Esophagus squamous epithelium (tissue), 5 donors: ENCODE measurements at regions of chr7 and their contacts with region 1.

Region 1: GRCh38 chr7:95723592-95724180 is 48.7 kb upstream of the DYNC1I1 start:
- DNase-seq: no peak
- H3K4me3 ChIP-seq: no peak overlapping the region
- H3K27ac ChIP-seq: no peak overlapping the region
- H3K4me1 ChIP-seq: no peaks in the 10 kb centered on the region
- H3K27me3 ChIP-seq: no peaks in the 10 kb centered on the region
- CTCF ChIP-seq: peak in 5 of 6 experiments; percentile 7 to 53 (median 44)
- POLR2A ChIP-seq: no peak

Region 2: GRCh38 chr7:95871078-95871782 is 147.5 kb after region 1 on chr7:
- intact Hi-C with region 1: loop called (anchors 10 kb)
- DNase-seq: no peak
- H3K4me3 ChIP-seq: no peak overlapping the region
- H3K27ac ChIP-seq: no peak overlapping the region
- H3K4me1 ChIP-seq: no peaks in the 10 kb centered on the region
- H3K27me3 ChIP-seq: no peaks in the 10 kb centered on the region
- CTCF ChIP-seq: peak; percentile 46 to 60 (median 59)
- POLR2A ChIP-seq: no peak

Region 3: GRCh38 chr7:96045919-96046318 is 322.2 kb after region 1 on chr7:
- intact Hi-C with region 1: no loop called
- DNase-seq: no peak
- H3K4me3 ChIP-seq: no peak overlapping the region
- H3K27ac ChIP-seq: no peak overlapping the region
- H3K4me1 ChIP-seq: no peaks in the 10 kb centered on the region
- H3K27me3 ChIP-seq: no peaks in the 10 kb centered on the region
- CTCF ChIP-seq: no peak
- POLR2A ChIP-seq: no peak